ENCODE measurements at regions of chr16 and their contacts with region 1.

Region 1: GRCh38 chr16:19105891-19106624 is 7.7 kb upstream of the ITPRIPL2 start:
- DNase-seq: no peak
- ATAC-seq: no peak
- H3K4me3 ChIP-seq: no peak overlapping the region
- H3K27ac ChIP-seq: no peak overlapping the region
- H3K4me1 ChIP-seq: peaks cover 13% of the 10 kb centered on the region; the same call in 1 of the 2 replicates
- H3K27me3 ChIP-seq: no peaks in the 10 kb centered on the region
- CTCF ChIP-seq: no peak

Region 2: GRCh38 chr16:19203374-19204031 is 97.4 kb after region 1 on chr16:
- CTCF ChIA-PET with region 1: no interaction called
- POLR2A ChIA-PET with region 1: no interaction called
- in situ Hi-C with region 1: no loop called
- intact Hi-C with region 1: no loop called
- DNase-seq: no peak
- ATAC-seq: 0 out of 2 replicates have a peak, but pooled peaks have one; percentile 15
- H3K4me3 ChIP-seq: no peak overlapping the region
- H3K27ac ChIP-seq: no peak overlapping the region
- H3K4me1 ChIP-seq: no peaks in the 10 kb centered on the region
- H3K27me3 ChIP-seq: no peaks in the 10 kb centered on the region
- CTCF ChIP-seq: no peak

Region 3: GRCh38 chr16:19664166-19664565 is 558.1 kb after region 1 on chr16:
- CTCF ChIA-PET with region 1: no interaction called
- POLR2A ChIA-PET with region 1: interaction called, 10 read pairs
- in situ Hi-C with region 1: no loop called
- intact Hi-C with region 1: no loop called
- DNase-seq: no peak
- ATAC-seq: no peak
- H3K4me3 ChIP-seq: no peak overlapping the region
- H3K27ac ChIP-seq: no peak overlapping the region
- H3K4me1 ChIP-seq: no peaks in the 10 kb centered on the region
- H3K27me3 ChIP-seq: no peaks in the 10 kb centered on the region
- CTCF ChIP-seq: no peak